Activated naive CD4-positive, alpha-beta T cell treated with anti-CD3 and anti-CD28 coated beads for 36 hours (primary cell): ENCODE measurements at regions of chr2 and their contacts with region 1.

Region 1: DNA sequence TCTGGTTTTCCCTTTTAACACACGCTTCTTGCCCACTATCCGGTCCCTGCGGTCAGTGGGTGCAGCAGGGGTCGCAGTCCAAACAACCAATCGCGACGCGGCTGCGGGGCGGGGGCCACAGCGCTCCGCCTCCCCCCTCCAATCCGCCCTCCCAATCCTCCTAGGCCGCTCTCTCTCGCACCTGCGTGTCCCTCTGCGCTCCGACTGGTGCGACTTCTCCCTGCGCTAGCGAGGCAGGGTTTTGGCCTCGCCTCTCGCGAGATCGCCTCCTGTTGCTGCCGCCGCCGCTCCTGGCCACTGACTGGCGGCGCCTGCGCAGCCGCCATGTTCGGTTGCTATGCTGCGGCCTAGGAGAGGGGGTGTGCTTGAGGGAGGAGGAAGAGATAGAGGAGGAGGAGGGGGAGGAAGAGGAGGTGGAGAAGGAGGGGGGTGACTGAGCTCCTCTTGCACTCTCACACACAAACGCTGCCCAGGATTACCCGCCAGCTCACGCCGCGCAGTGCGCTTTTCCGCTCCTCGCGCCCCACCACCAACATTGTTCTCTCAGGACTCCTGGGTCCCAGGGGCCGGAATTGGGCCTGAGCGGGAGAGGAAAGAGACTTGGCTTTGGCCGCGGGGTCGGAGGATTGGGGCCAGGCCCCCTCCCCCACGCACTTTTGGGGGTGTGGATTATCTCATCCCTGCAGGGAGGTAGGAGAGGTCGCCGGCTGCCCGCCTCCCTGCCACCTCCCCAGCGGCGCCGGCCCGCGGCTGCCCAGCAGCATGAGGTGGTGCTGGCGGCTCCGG is at the start of gene PTPN4:
- DNase-seq: peak; percentile 96
- H3K4me3 Mint-ChIP-seq: peak within 1 kb of the TSS; percentile 86
- H3K27ac Mint-ChIP-seq: peak within 1 kb of the TSS; percentile 90
- H3K4me1 Mint-ChIP-seq: peaks cover 35% of the 10 kb centered on the region
- H3K27me3 Mint-ChIP-seq: no peaks in the 10 kb centered on the region
- total RNA-seq, gene PTPN4: 28.4 to 29.8 TPM

Region 2: DNA sequence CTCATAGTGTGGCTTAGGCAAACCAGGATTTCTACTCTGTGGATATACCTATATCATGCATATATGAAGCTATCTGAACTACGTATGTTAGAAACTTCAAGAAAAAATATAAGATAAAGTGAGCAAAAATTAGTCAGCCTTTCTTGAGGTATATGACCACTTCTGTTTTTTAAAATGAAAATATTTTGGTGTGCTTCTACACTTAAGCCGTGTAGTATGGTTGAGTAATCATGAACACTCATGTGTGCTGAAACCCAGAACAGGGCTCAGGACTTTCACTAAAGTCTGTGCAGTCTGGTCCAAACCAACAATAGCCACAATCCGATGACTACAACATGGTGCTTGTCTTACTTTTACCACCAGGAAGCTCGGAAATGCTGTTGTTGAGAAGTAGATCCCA is 129.5 kb before region 1 on chr2:
- CTCF ChIA-PET with region 1: no interaction called
- intact Hi-C with region 1: no loop called
- DNase-seq: no peak
- H3K4me3 Mint-ChIP-seq: no peak overlapping the region
- H3K27ac Mint-ChIP-seq: no peak overlapping the region
- H3K4me1 Mint-ChIP-seq: no peaks in the 10 kb centered on the region
- H3K27me3 Mint-ChIP-seq: peaks cover 2% of the 10 kb centered on the region

Region 3: GRCh38 chr2:119678998-119679710 is 80.5 kb before region 1 on chr2 and contains the start of gene TMEM177:
- CTCF ChIA-PET with region 1: no interaction called
- intact Hi-C with region 1: loop called (anchors 1 kb)
- DNase-seq: peak; percentile 89
- H3K4me3 Mint-ChIP-seq: peak within 1 kb of the TSS; percentile 81
- H3K27ac Mint-ChIP-seq: peak within 1 kb of the TSS; percentile 62
- H3K4me1 Mint-ChIP-seq: peaks cover 41% of the 10 kb centered on the region
- H3K27me3 Mint-ChIP-seq: no peaks in the 10 kb centered on the region
- total RNA-seq, gene TMEM177: 11.9 to 13.3 TPM

Region 4: GRCh38 chr2:119820275-119820674 is 60.6 kb after region 1 on chr2:
- CTCF ChIA-PET with region 1: interaction called, 59 read pairs
- intact Hi-C with region 1: loop called (anchors 1 kb)
- DNase-seq: no peak
- H3K4me3 Mint-ChIP-seq: no peak overlapping the region
- H3K27ac Mint-ChIP-seq: no peak overlapping the region
- H3K4me1 Mint-ChIP-seq: peaks cover 41% of the 10 kb centered on the region
- H3K27me3 Mint-ChIP-seq: no peaks in the 10 kb centered on the region

Region 5: GRCh38 chr2:119929537-119929936 is 169.9 kb after region 1 on chr2:
- CTCF ChIA-PET with region 1: interaction called, 3 read pairs
- intact Hi-C with region 1: loop called (anchors 2 kb)
- DNase-seq: peak; percentile 10
- H3K4me3 Mint-ChIP-seq: peak overlapping the region; percentile 59
- H3K27ac Mint-ChIP-seq: peak overlapping the region; percentile 83
- H3K4me1 Mint-ChIP-seq: peaks cover 49% of the 10 kb centered on the region
- H3K27me3 Mint-ChIP-seq: no peaks in the 10 kb centered on the region

Region 6: DNA sequence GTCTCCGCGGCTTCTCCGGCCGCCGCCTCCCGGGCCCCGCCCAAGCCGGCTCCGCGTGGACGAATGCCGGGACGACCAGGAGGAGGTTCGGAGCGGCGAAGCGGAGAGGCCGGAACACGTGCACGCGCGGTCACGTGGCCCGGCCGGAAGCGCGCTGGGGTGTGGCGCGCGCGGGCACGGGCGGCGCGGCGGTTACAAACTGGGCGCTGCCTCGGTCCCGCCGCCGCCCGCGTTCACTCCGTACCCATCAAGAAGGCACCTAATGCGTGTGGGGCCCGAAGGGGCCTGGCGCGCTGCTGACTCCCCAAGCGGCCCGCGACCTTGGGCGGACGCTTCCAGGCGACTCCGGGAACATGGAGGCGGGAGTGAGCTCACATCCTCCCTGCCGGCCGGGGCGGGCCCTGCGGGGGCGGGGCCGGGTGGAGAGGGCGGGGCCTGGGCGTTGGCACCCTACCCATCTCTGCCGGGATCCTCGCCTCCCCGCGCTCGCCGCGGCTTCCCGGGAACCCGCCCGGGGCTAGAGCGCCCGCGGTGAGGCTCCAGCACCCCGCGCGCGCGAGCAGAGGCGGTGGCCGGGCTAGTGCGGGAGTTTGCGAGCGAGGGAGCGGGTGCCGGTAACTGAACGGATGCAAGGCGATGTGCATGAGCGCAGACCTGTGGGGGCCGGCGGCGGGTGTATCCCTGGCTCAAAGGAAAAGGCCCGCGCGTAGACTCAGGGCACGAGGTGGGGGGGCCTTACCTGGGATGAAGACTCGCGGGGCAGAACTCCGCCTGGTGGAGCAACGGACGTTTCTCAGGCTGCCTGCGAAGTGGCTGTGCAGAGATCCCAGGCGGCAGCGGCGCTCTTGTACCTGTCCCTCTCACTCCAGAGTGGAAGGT is 463.6 kb after region 1 on chr2 and contains the start of gene TMEM185B:
- CTCF ChIA-PET with region 1: no interaction called
- intact Hi-C with region 1: loop called (anchors 1 kb)
- DNase-seq: peak; percentile 93
- H3K4me3 Mint-ChIP-seq: peak within 1 kb of the TSS; percentile 80
- H3K27ac Mint-ChIP-seq: peak within 1 kb of the TSS; percentile 87
- H3K4me1 Mint-ChIP-seq: peaks cover 43% of the 10 kb centered on the region
- H3K27me3 Mint-ChIP-seq: no peaks in the 10 kb centered on the region
- total RNA-seq, gene TMEM185B: 11.4 to 12.2 TPM

Region 7: GRCh38 chr2:120252225-120253021 is 492.8 kb after region 1 on chr2 and contains the start of gene RALB:
- CTCF ChIA-PET with region 1: no interaction called
- intact Hi-C with region 1: loop called (anchors 1 kb)
- DNase-seq: peak; percentile 99
- H3K4me3 Mint-ChIP-seq: peak within 1 kb of the TSS; percentile 96
- H3K27ac Mint-ChIP-seq: peak within 1 kb of the TSS; percentile 74
- H3K4me1 Mint-ChIP-seq: peaks cover 40% of the 10 kb centered on the region
- H3K27me3 Mint-ChIP-seq: no peaks in the 10 kb centered on the region
- total RNA-seq, gene RALB: 16.4 to 19.3 TPM